B cell (primary cell): ENCODE measurements at regions of chr11 and their contacts with region 1.

Region 1: GRCh38 chr11:32176223-32176934 is 85.5 kb downstream of the RCN1 start:
- DNase-seq: peak; percentile 78
- ATAC-seq: peak; percentile 54
- H3K4me3 ChIP-seq: no peak overlapping the region
- H3K4me3 Mint-ChIP-seq: no peak overlapping the region
- H3K27ac ChIP-seq: no peak overlapping the region
- H3K27ac Mint-ChIP-seq: no peak overlapping the region
- H3K4me1 ChIP-seq: no peaks in the 10 kb centered on the region
- H3K4me1 Mint-ChIP-seq: no peaks in the 10 kb centered on the region
- H3K27me3 ChIP-seq: no peaks in the 10 kb centered on the region
- H3K27me3 Mint-ChIP-seq: peaks cover 12% of the 10 kb centered on the region
- CTCF ChIP-seq: peak; percentile 97

Region 2: DNA sequence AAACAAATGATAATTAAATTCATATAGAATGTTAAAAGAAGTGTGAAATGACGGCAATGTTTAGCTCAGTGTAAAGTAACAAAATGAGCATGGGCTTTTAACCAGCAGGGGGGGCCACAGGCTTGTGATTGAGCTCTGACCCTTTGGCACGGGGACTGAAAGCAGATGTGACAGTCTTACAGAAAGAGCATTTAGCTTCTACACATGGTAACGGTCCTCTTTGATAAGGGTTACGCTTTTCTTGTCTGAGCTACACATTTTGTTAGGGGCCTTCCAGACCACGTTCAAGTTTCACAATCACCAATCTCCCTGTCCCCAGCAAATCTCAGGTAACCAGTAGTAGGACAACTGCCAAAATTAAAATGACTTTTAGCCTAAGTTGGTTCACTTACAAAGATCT is 1069.3 kb before region 1 on chr11:
- CTCF ChIA-PET with region 1: interaction called, 25 read pairs
- POLR2A ChIA-PET with region 1: no interaction called
- intact Hi-C with region 1: no loop called
- DNase-seq: peak; percentile 29
- ATAC-seq: no peak
- H3K4me3 ChIP-seq: no peak overlapping the region
- H3K4me3 Mint-ChIP-seq: no peak overlapping the region
- H3K27ac ChIP-seq: no peak overlapping the region
- H3K27ac Mint-ChIP-seq: no peak overlapping the region
- H3K4me1 ChIP-seq: no peaks in the 10 kb centered on the region
- H3K4me1 Mint-ChIP-seq: no peaks in the 10 kb centered on the region
- H3K27me3 ChIP-seq: no peaks in the 10 kb centered on the region
- H3K27me3 Mint-ChIP-seq: no peaks in the 10 kb centered on the region
- CTCF ChIP-seq: peak; percentile 56

Region 3: DNA sequence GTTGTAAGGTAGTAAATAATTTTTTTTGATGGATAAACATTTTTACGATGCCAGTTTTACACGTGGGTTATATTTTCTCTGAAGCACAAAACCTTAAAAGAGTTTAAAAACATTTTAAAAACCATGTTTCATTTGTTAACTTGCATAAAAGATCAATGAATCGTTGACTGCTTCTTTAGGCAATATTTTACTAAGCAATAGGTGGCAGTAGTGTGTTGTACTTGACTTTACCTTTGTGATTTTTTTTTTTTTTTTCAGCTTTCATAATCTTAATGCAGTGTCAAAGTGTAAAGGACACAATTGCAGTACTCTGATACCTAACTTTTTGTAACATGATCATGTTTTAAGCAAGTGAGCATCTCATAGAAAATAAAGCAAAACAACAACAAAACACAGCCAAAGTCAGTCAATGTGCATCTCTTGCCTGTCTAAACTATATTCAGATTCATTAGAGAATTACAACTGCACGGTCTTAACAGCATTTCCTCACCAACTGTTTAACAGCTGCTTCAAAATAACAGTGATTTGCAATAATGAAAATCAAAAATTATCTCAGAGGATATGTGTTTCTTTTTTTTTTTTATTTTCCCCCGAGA is 779.0 kb before region 1 on chr11:
- CTCF ChIA-PET with region 1: interaction called, 17 read pairs
- POLR2A ChIA-PET with region 1: no interaction called
- intact Hi-C with region 1: no loop called
- DNase-seq: peak; percentile 13
- ATAC-seq: peak; percentile 28
- H3K4me3 ChIP-seq: no peak overlapping the region
- H3K4me3 Mint-ChIP-seq: no peak overlapping the region
- H3K27ac ChIP-seq: no peak overlapping the region
- H3K27ac Mint-ChIP-seq: no peak overlapping the region
- H3K4me1 ChIP-seq: no peaks in the 10 kb centered on the region
- H3K4me1 Mint-ChIP-seq: no peaks in the 10 kb centered on the region
- H3K27me3 ChIP-seq: no peaks in the 10 kb centered on the region
- H3K27me3 Mint-ChIP-seq: no peaks in the 10 kb centered on the region
- CTCF ChIP-seq: peak; percentile 60

Region 4: DNA sequence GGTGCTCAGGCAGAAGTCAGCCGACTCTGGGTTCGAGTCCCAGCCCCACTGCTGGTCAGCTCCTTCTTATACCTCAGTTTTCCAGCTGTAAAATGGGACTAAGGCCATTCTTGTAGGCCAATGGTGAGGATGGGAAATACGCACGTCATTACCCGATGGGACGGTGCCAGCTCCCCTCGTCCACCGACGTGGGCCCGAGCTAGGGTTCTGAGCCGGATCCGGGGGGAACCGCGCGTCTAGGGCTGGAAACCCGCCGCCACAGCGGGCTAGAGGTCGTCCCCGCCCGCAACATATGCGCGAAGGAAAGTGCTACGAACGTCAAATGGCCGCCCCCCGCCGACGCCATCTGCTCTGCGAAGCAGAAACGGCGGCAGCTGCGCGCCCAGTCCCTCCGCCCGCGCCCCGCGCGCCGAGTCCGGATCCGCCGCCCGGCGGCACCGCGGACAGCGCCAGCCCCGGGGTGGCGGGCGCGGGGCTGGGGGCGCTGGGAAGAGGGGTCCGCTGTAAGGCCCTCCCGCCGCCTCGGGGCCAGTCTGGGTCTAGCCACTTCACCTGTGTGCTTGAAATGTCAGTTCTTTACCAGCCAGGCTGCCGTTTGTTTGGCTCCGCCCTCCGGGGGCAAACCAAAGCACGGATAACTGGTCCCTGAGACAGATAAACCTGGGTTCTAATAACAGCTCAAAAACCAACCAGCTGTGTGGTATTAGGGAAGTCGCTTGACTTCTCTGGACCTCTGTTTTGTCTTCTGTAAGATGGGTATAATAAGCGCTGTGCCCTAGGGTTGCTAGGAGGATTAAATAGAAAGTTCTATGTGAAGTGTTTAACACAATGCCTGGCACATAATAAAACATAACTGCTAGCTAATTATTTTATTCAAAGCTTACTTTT is 189.0 kb before region 1 on chr11:
- CTCF ChIA-PET with region 1: no interaction called
- POLR2A ChIA-PET with region 1: no interaction called
- intact Hi-C with region 1: no loop called
- DNase-seq: no peak
- ATAC-seq: no peak
- H3K4me3 ChIP-seq: no peak overlapping the region
- H3K4me3 Mint-ChIP-seq: no peak overlapping the region
- H3K27ac ChIP-seq: no peak overlapping the region
- H3K27ac Mint-ChIP-seq: no peak overlapping the region
- H3K4me1 ChIP-seq: no peaks in the 10 kb centered on the region
- H3K4me1 Mint-ChIP-seq: no peaks in the 10 kb centered on the region
- H3K27me3 ChIP-seq: peaks cover 0 to 21% (median 17%) of the 10 kb centered on the region in 4 experiments
- H3K27me3 Mint-ChIP-seq: peaks cover 34% of the 10 kb centered on the region
- CTCF ChIP-seq: no peak

Region 5: GRCh38 chr11:32052218-32052617 is 124.2 kb before region 1 on chr11:
- CTCF ChIA-PET with region 1: interaction called, 197 read pairs
- POLR2A ChIA-PET with region 1: no interaction called
- intact Hi-C with region 1: loop called (anchors 1 kb)
- DNase-seq: peak; percentile 55
- ATAC-seq: no peak
- H3K4me3 ChIP-seq: no peak overlapping the region
- H3K4me3 Mint-ChIP-seq: no peak overlapping the region
- H3K27ac ChIP-seq: no peak overlapping the region
- H3K27ac Mint-ChIP-seq: no peak overlapping the region
- H3K4me1 ChIP-seq: no peaks in the 10 kb centered on the region
- H3K4me1 Mint-ChIP-seq: no peaks in the 10 kb centered on the region
- H3K27me3 ChIP-seq: peaks cover 0 to 6% (median 3%) of the 10 kb centered on the region in 4 experiments
- H3K27me3 Mint-ChIP-seq: peaks cover 46% of the 10 kb centered on the region
- CTCF ChIP-seq: peak; percentile 87